WTC11 (cell line): ENCODE measurements at regions of chr15 and their contacts with region 1.

Region 1: GRCh38 chr15:90931737-90932659 is at the start of gene HDDC3:
- DNase-seq: peak; percentile 96
- ATAC-seq: peak; percentile 49
- H3K4me3 Mint-ChIP-seq: peak within 1 kb of the TSS; percentile 95
- H3K27ac Mint-ChIP-seq: peak within 1 kb of the TSS; percentile 95
- H3K4me1 Mint-ChIP-seq: peaks cover 23% of the 10 kb centered on the region
- H3K27me3 Mint-ChIP-seq: peaks cover 12% of the 10 kb centered on the region
- CTCF ChIP-seq: peak; percentile 83
- total RNA-seq, gene HDDC3: 16.4 to 23.6 TPM (median 21.7 TPM) in 3 replicates

Region 2: GRCh38 chr15:90818251-90819210 is 113.5 kb before region 1 on chr15:
- CTCF ChIA-PET with region 1: interaction called, 10 read pairs
- POLR2A ChIA-PET with region 1: no interaction called
- DNase-seq: peak; percentile 50
- ATAC-seq: peak; percentile 75
- H3K4me3 Mint-ChIP-seq: no peak overlapping the region
- H3K27ac Mint-ChIP-seq: peak overlapping the region; percentile 93
- H3K4me1 Mint-ChIP-seq: peaks cover 35% of the 10 kb centered on the region
- H3K27me3 Mint-ChIP-seq: no peaks in the 10 kb centered on the region
- CTCF ChIP-seq: no peak

Region 3: GRCh38 chr15:90869601-90870353 is 62.2 kb before region 1 on chr15:
- CTCF ChIA-PET with region 1: interaction called, 21 read pairs
- POLR2A ChIA-PET with region 1: no interaction called
- DNase-seq: peak; percentile 69
- ATAC-seq: peak; percentile 39
- H3K4me3 Mint-ChIP-seq: peak overlapping the region; percentile 75
- H3K27ac Mint-ChIP-seq: peak overlapping the region; percentile 91
- H3K4me1 Mint-ChIP-seq: peaks cover 60% of the 10 kb centered on the region
- H3K27me3 Mint-ChIP-seq: no peaks in the 10 kb centered on the region; the same call in 1 of the 2 replicates
- CTCF ChIP-seq: no peak

Region 4: GRCh38 chr15:90902040-90902839 is 29.8 kb before region 1 on chr15:
- CTCF ChIA-PET with region 1: interaction called, 194 read pairs
- POLR2A ChIA-PET with region 1: interaction called, 17 read pairs
- DNase-seq: peak; percentile 78
- ATAC-seq: peak; percentile 77
- H3K4me3 Mint-ChIP-seq: peak overlapping the region; percentile 70
- H3K27ac Mint-ChIP-seq: peak overlapping the region; percentile 41; the same call in 1 of the 2 replicates
- H3K4me1 Mint-ChIP-seq: peaks cover 23% of the 10 kb centered on the region
- H3K27me3 Mint-ChIP-seq: peaks cover 26% of the 10 kb centered on the region
- CTCF ChIP-seq: no peak

Region 5: DNA sequence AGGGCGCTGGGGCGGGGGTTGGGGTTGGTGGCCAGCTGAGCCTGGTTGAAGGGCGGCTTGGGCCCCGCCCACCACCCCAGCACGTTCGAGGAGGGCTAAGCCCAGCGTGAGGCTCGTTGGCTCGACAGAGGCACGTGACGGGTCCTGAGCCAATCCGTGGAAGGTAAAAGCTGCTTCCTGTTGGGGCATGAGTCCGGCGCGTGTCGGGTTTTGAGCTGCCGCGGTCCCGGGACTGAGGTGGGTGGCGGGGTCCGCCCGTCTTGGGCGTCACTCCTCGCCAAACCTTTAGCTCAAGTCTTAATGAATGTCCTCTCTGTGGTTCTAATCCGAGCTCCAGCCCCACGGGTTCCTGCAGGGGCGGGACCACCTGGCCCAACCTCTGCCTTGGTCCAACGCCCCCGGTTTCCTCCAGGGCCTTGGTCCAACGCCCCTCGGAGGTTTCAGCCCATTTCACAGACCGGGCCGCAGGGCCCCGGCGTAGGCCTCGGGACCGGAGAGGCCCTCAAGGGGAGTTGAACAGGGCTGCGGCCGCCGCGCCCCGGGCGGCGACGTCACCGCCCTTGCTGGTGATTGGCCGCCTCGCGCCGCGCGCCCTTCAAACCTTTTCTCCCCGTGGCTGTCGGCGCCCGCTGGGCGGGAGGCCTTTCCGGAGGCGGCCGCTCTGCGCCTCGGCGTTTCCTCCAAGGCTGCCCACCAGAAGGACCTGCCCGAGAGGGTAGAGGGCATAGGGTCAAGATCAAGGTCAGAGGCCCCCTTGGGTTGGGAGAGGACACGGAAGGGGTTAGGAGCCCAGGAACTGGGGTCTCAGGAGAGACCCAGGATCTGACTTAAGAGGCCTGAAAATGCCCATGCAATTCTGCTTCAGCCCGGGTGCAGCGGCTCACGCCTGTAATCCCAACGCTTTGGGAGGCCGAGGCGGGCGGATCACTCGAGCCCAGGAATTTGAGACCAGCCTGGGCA is 23.0 kb after region 1 on chr15 and contains the start of gene RCCD1:
- CTCF ChIA-PET with region 1: interaction called, 264 read pairs
- POLR2A ChIA-PET with region 1: interaction called, 19 read pairs
- DNase-seq: peak; percentile 93
- ATAC-seq: peak; percentile 75
- H3K4me3 Mint-ChIP-seq: peak within 1 kb of the TSS; percentile 74
- H3K27ac Mint-ChIP-seq: peak within 1 kb of the TSS; percentile 76
- H3K4me1 Mint-ChIP-seq: peaks cover 16% of the 10 kb centered on the region
- H3K27me3 Mint-ChIP-seq: no peaks in the 10 kb centered on the region
- CTCF ChIP-seq: no peak
- total RNA-seq, gene RCCD1: 26.1 to 31.9 TPM (median 27.8 TPM) in 3 replicates

Region 6: DNA sequence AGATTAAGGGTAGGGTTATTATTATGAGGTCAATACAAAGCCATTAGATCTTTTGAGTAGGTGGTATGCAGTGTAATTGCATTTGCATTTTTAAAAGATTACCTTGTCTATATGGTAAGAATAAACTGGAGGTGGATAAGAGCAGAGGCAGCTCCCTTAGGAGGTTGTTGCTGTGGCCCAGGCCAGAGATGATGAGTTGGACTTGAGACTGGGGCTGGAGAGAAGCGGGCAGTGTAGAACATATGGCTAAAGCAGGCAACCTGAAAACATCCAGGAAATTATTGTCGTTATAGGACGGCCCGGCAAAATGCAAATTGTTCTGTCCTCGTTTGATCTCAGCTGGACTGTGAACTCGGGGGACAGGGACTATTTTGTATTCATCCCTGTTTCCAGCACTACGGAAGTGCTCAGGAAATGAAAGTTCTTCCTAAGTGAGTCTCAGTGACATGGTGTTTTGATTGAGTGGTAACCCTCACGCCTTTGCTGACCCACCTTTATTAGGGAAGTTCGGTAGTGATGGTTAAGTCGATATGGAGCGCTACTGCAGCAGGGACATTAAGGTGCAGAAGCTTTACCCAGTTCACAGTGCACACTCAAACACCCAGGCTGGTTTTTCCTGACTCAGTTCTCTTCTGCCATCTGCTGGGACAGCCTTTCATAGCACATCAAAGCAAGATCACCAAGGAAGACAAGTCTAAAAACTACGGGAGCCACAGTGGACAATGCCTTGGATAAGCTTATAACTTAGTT is 117.6 kb after region 1 on chr15:
- CTCF ChIA-PET with region 1: interaction called, 20 read pairs
- POLR2A ChIA-PET with region 1: no interaction called
- DNase-seq: peak; percentile 60
- ATAC-seq: peak; percentile 96
- H3K4me3 Mint-ChIP-seq: no peak overlapping the region
- H3K27ac Mint-ChIP-seq: no peak overlapping the region
- H3K4me1 Mint-ChIP-seq: no peaks in the 10 kb centered on the region
- H3K27me3 Mint-ChIP-seq: no peaks in the 10 kb centered on the region; the same call in 1 of the 2 replicates
- CTCF ChIP-seq: no peak

Region 7: DNA sequence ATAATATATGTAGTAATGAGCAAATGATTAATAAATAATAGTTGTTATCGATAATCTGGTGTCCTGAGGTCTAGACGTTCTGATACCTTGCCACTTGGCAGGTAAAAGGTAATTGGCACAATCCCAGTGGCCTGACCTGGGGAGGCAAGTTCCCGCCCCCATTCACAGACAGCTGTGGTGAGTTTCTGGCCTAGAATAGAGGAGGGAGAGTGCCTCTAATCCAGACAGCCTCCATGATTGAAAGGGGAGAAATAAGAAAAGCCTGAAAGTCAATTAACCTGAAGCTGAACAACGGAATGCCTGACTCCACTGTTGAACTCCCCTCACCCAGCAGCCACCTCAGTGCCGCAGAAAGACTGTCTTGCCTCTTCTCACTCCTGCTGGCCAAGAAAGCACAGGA is 130.0 kb after region 1 on chr15:
- CTCF ChIA-PET with region 1: no interaction called
- POLR2A ChIA-PET with region 1: no interaction called
- DNase-seq: no peak
- ATAC-seq: no peak
- H3K4me3 Mint-ChIP-seq: no peak overlapping the region
- H3K27ac Mint-ChIP-seq: no peak overlapping the region
- H3K4me1 Mint-ChIP-seq: no peaks in the 10 kb centered on the region
- H3K27me3 Mint-ChIP-seq: peaks cover 3% of the 10 kb centered on the region; the same call in 1 of the 2 replicates
- CTCF ChIP-seq: no peak